ENCODE measurements at regions of chr5 and their contacts with region 1.

Region 1: GRCh38 chr5:56056875-56057274 is 62.1 kb upstream of the IL6ST start:
- DNase-seq: no peak
- ATAC-seq: no peak
- H3K4me3 Mint-ChIP-seq: no peak overlapping the region
- H3K27ac Mint-ChIP-seq: peak overlapping the region; percentile 17
- H3K4me1 Mint-ChIP-seq: peaks cover 53% of the 10 kb centered on the region
- H3K27me3 Mint-ChIP-seq: no peaks in the 10 kb centered on the region
- CTCF ChIP-seq: no peak

Region 2: GRCh38 chr5:55994574-55995333 is 62.1 kb before region 1 on chr5 and contains the start of gene IL6ST:
- CTCF ChIA-PET with region 1: no interaction called
- POLR2A ChIA-PET with region 1: interaction called, 11 read pairs
- intact Hi-C with region 1: loop called (anchors 5 kb)
- DNase-seq: peak; percentile 96
- ATAC-seq: peak; percentile 95
- H3K4me3 Mint-ChIP-seq: peak within 1 kb of the TSS; percentile 97
- H3K27ac Mint-ChIP-seq: peak within 1 kb of the TSS; percentile 99
- H3K4me1 Mint-ChIP-seq: peaks cover 52% of the 10 kb centered on the region
- H3K27me3 Mint-ChIP-seq: no peaks in the 10 kb centered on the region
- CTCF ChIP-seq: no peak
- total RNA-seq, gene IL6ST: 31.4 to 35.3 TPM

Region 3: GRCh38 chr5:56012281-56012963 is 44.5 kb before region 1 on chr5:
- CTCF ChIA-PET with region 1: no interaction called
- POLR2A ChIA-PET with region 1: no interaction called
- intact Hi-C with region 1: loop called (anchors 5 kb)
- DNase-seq: peak; percentile 48
- ATAC-seq: peak; percentile 82
- H3K4me3 Mint-ChIP-seq: peak overlapping the region; percentile 3
- H3K27ac Mint-ChIP-seq: peak overlapping the region; percentile 60
- H3K4me1 Mint-ChIP-seq: peaks cover 26% of the 10 kb centered on the region
- H3K27me3 Mint-ChIP-seq: no peaks in the 10 kb centered on the region
- CTCF ChIP-seq: no peak

Region 4: DNA sequence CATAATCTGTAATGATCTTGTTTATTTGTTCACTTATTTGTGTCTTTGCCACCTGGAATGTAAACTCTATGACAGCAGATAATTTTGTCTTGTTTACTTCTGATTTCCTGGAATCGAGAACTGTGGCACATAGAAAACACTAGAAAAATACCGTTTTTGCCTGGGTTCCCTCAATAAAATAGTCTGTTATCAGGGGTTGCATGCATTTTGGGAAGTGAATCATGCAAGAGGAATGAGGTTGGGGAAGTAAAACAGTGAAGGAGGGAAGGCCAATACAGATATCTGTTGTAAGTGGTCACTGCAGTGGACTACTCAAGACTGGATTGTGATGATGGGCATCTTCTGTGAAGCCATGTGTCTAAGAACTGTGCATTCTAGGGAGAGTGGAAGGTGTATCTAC is 16.9 kb before region 1 on chr5:
- CTCF ChIA-PET with region 1: no interaction called
- POLR2A ChIA-PET with region 1: no interaction called
- intact Hi-C with region 1: no loop called
- DNase-seq: no peak
- ATAC-seq: no peak
- H3K4me3 Mint-ChIP-seq: no peak overlapping the region
- H3K27ac Mint-ChIP-seq: no peak overlapping the region
- H3K4me1 Mint-ChIP-seq: peaks cover 19% of the 10 kb centered on the region
- H3K27me3 Mint-ChIP-seq: no peaks in the 10 kb centered on the region
- CTCF ChIP-seq: no peak